ENCODE measurements at regions of chr14 and their contacts with region 1.

Region 1: GRCh38 chr14:63727774-63728728 is at the start of gene SGPP1:
- DNase-seq: peak; percentile 88
- H3K4me3 Mint-ChIP-seq: peak within 1 kb of the TSS; percentile 99
- H3K27ac Mint-ChIP-seq: peak within 1 kb of the TSS; percentile 94
- H3K4me1 Mint-ChIP-seq: peaks cover 33% of the 10 kb centered on the region
- H3K27me3 Mint-ChIP-seq: peaks cover 10% of the 10 kb centered on the region
- total RNA-seq, gene SGPP1: 19.3 to 20.6 TPM

Region 2: GRCh38 chr14:63551332-63551731 is 176.7 kb before region 1 on chr14:
- CTCF ChIA-PET with region 1: no interaction called
- POLR2A ChIA-PET with region 1: no interaction called
- DNase-seq: no peak
- H3K4me3 Mint-ChIP-seq: no peak overlapping the region
- H3K27ac Mint-ChIP-seq: no peak overlapping the region
- H3K4me1 Mint-ChIP-seq: peaks cover 2% of the 10 kb centered on the region
- H3K27me3 Mint-ChIP-seq: no peaks in the 10 kb centered on the region

Region 3: GRCh38 chr14:63641473-63642228 is 86.4 kb before region 1 on chr14 and contains the start of gene WDR89:
- CTCF ChIA-PET with region 1: interaction called, 5 read pairs
- POLR2A ChIA-PET with region 1: interaction called, 30 read pairs
- DNase-seq: peak; percentile 98
- H3K4me3 Mint-ChIP-seq: peak within 1 kb of the TSS; percentile 80
- H3K27ac Mint-ChIP-seq: peak within 1 kb of the TSS; percentile 89
- H3K4me1 Mint-ChIP-seq: peaks cover 38% of the 10 kb centered on the region
- H3K27me3 Mint-ChIP-seq: no peaks in the 10 kb centered on the region
- total RNA-seq, gene WDR89: 20.1 to 21.9 TPM

Region 4: GRCh38 chr14:63650256-63650952 is 77.6 kb before region 1 on chr14:
- CTCF ChIA-PET with region 1: no interaction called
- POLR2A ChIA-PET with region 1: interaction called, 13 read pairs
- DNase-seq: peak; percentile 62
- H3K4me3 Mint-ChIP-seq: no peak overlapping the region
- H3K27ac Mint-ChIP-seq: peak overlapping the region; percentile 92
- H3K4me1 Mint-ChIP-seq: peaks cover 21% of the 10 kb centered on the region
- H3K27me3 Mint-ChIP-seq: no peaks in the 10 kb centered on the region

Region 5: DNA sequence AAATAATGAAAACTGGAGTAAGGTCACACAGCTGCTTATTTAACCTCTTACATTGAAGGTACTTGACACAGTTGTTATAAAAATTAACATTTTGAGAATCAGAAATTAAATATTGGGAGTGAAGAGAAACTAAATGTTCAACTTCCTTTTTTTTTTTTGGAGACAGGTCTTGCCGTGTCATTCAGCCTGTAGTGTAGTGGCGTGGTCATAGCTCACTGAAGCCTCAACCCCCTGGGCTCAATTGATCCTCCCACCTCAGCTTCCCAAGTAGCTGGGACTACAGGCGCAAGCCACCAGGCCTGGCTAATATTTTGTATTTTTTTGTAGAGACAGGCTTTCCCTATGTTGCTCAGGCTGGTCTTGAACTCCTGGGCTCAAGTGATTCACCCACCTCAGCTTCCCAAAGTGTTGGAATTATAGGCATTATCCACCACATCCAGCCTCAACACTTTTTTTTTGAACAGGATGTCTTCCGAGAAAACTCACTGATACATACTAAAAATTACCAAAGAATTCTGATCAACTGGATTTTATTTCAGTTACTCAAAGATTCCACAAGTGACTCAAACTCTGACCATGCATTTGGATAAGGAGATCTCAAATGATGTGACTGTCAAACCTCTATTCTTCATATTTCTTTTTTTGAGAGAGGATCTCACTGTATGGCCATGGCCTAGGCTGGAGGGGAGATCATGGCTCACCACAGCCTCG is 35.6 kb before region 1 on chr14:
- CTCF ChIA-PET with region 1: no interaction called
- POLR2A ChIA-PET with region 1: no interaction called
- DNase-seq: no peak
- H3K4me3 Mint-ChIP-seq: no peak overlapping the region
- H3K27ac Mint-ChIP-seq: no peak overlapping the region
- H3K4me1 Mint-ChIP-seq: no peaks in the 10 kb centered on the region
- H3K27me3 Mint-ChIP-seq: no peaks in the 10 kb centered on the region

Region 6: DNA sequence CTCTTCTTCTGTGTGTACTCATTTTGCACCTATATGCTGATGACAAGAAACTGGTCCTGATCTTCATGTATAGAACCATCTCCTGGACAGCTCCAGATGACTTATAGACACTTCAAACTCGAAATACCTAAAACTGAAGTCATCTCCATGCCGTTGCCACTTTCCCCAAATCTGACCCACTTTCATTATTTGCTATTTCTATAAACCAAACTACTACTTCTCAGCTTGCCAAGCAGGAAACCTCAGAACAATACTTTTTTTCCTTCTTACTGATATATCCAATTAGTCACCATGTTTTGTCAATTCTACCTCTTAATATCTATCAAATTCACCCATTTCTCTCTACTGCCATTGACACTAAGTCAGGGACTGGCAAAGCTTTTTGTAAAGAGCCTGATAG is 15.0 kb before region 1 on chr14:
- CTCF ChIA-PET with region 1: interaction called, 4 read pairs
- POLR2A ChIA-PET with region 1: interaction called, 12 read pairs
- DNase-seq: no peak
- H3K4me3 Mint-ChIP-seq: no peak overlapping the region
- H3K27ac Mint-ChIP-seq: peak overlapping the region; percentile 0
- H3K4me1 Mint-ChIP-seq: peaks cover 19% of the 10 kb centered on the region
- H3K27me3 Mint-ChIP-seq: no peaks in the 10 kb centered on the region

Region 7: DNA sequence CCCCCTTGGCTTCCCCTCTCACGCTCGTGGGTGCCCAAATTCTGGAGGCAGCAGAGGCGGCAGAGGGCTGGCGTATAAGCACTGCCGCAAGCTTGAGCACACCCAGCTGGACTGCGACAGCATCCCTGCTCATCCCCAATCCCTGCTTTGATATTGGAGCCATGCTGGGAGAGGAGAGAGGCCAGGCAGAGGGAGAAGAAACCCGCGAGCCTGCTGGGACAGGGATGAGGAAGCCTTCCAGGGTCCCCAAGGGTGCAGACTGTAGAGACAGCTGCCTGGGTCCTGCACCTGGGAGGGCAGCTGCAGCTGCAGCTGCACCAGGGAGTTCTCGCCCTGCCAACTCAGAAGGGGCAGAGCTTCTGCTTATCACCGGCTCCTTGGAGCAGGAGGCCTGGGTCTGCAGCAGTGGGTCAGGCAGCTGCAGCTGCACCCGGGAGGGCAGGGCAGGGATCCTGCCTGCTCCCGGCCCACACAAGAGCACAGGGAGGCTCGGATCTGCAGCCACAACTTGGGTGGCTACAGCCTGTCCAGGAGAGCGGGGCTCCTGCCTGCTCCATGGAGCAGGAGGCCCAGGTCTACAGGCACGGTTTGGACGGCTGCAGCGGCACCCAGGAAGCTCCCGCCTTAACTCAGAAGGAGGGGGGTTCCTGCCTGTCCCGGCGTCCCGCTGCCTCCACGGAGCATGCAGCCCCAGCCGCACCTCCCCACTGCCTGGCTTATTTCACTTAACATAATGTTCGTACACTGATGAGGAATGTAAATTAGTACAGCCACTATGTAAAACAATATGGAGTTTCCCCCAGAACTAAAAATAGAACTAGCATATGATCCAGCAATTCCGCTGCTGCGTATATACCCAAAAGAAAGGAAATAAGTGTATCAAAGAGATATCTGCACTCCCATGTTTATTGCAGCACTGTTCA is 60.2 kb after region 1 on chr14:
- CTCF ChIA-PET with region 1: no interaction called
- POLR2A ChIA-PET with region 1: no interaction called
- DNase-seq: no peak
- H3K4me3 Mint-ChIP-seq: no peak overlapping the region
- H3K27ac Mint-ChIP-seq: no peak overlapping the region
- H3K4me1 Mint-ChIP-seq: no peaks in the 10 kb centered on the region
- H3K27me3 Mint-ChIP-seq: peaks cover 8% of the 10 kb centered on the region

Region 8: DNA sequence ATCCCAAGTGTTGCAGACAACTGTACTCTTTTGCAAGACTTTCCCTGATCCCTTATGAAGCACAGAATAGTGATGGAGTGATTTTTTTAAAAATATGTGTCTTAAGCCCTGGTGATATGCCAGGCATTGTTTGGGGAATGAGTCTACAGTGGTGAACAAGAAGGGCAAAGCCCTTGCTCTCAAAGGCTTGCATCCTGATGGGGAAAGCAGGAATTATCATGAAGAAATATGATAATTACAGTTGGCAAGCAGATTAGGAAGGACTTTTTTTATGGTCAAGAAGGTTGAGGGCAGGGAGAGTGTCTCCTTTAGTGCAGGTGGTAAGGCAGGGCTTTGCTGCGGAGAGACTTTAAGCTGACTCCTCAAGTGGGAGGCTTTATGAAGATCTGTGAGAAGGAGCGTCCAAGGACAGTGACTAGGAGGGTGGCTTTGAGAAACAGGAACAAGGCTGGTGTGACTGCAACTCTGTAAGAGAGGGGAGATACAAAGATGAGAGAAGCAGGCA is 224.9 kb after region 1 on chr14:
- CTCF ChIA-PET with region 1: no interaction called
- POLR2A ChIA-PET with region 1: no interaction called
- DNase-seq: no peak
- H3K4me3 Mint-ChIP-seq: no peak overlapping the region
- H3K27ac Mint-ChIP-seq: no peak overlapping the region
- H3K4me1 Mint-ChIP-seq: peaks cover 8% of the 10 kb centered on the region
- H3K27me3 Mint-ChIP-seq: no peaks in the 10 kb centered on the region